GM23248 (cell line): ENCODE measurements at regions of chrX and their contacts with region 1.

Region 1: GRCh38 chrX:2595258-2595657 is 94.5 kb upstream of the DHRSX start:
- DNase-seq: peak; percentile 74
- H3K4me3 ChIP-seq: no peak overlapping the region
- H3K27ac ChIP-seq: peak overlapping the region; percentile 23; the same call in 1 of the 2 replicates
- H3K4me1 ChIP-seq: peaks cover 7% of the 10 kb centered on the region
- H3K27me3 ChIP-seq: no peaks in the 10 kb centered on the region

Region 2: DNA sequence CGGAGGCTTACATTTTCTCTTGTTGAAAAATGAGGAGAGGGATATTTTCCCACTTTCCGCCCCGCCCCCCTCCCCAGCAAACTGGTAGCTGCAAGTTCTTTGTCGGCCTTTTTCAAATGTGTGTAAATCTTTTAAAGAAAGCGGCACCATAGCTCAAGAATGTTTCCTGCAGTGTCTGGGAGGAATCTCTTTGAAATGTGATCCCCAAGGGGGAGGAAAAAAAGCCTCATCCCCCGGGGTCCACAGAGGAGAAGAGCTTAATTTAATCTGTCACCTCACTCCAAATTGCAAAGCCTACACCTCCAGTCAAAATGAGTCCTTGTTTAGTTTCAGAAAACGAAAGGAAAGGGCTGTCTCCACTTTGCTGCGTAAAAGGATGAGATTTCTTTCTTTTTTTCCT is 945.6 kb before region 1 on chrX:
- in situ Hi-C with region 1: loop called (anchors 10 kb)
- DNase-seq: peak; percentile 17
- H3K4me3 ChIP-seq: peak overlapping the region; percentile 71
- H3K27ac ChIP-seq: no peak overlapping the region
- H3K4me1 ChIP-seq: no peaks in the 10 kb centered on the region
- H3K27me3 ChIP-seq: no peaks in the 10 kb centered on the region

Region 3: DNA sequence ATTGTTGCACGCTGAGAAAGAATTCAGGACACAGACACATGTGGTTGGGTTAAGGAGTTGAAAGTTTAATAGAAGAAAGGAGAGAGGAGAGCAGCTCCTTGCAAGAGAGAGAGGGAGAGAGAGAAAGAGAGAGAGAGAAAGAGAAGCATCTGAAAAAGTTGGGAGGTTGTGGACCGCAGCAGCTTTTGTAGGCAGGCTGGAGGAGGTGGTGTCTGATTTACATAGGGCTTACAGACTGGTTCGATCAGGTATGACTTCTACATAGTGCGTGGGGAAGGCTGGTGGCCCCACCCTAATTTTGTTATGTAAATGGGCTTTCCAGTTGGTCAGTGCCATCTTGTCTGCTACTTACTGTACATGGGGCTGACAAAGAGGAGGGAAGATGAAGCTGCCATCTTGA is 206.0 kb after region 1 on chrX:
- in situ Hi-C with region 1: no loop called
- DNase-seq: no peak
- H3K4me3 ChIP-seq: no peak overlapping the region
- H3K27ac ChIP-seq: no peak overlapping the region
- H3K4me1 ChIP-seq: peaks cover 12% of the 10 kb centered on the region
- H3K27me3 ChIP-seq: no peaks in the 10 kb centered on the region